ENCODE measurements at regions of chr11 and their contacts with region 1.

Region 1: DNA sequence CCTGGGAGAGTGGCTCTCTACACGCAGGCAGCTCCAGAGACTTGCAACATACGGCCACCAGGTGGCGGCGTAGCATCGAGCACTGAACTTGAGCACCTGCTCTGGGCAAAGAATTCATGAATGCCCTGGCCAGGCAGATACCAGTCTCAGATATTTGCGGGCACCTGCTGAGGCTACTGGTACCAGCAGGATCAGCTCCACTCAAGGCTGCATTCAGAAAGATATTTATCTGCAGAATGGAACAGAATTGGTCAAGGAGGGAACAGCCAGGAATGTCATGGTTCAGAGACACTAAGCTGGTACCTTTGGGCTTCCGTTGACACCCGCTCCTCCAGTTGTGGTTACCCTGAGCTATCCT is 10.8 kb upstream of the CCDC86 start:
- DNase-seq: peak; percentile 58 to 86 (median 71)
- H3K4me3 ChIP-seq: no peak overlapping the region
- H3K4me3 Mint-ChIP-seq: peak overlapping the region in 2 of 7 donors; percentile 54 to 83
- H3K27ac ChIP-seq: no peak overlapping the region
- H3K27ac Mint-ChIP-seq: peak overlapping the region in 3 of 8 donors; percentile 58 to 86 (median 60)
- H3K4me1 ChIP-seq: no peaks in the 10 kb centered on the region
- H3K4me1 Mint-ChIP-seq: peaks cover 0 to 3% (median 0%) of the 10 kb centered on the region in 3 donors
- H3K27me3 ChIP-seq: no peaks in the 10 kb centered on the region
- H3K27me3 Mint-ChIP-seq: peaks cover 12 to 29% of the 10 kb centered on the region in 2 donors

Region 2: DNA sequence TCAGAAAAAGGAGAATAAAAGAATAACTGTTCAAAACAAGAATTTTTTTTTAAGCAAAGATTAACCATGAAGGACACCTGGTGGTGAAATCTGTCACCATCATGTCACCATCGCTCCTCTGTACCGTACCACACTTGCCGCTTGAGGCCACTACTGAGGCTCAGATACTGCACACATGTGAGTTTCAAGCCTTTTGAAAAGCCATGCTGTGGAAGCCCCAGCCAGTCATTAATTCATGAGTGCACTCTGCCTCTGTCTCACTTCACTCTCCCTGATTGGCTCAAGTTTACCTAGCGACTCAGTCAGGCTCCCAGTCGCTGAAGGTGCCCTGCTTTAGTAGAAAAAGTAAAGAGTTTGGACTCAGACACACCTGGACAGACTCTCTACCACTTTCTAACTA is 345.1 kb before region 1 on chr11:
- CTCF ChIA-PET with region 1: no interaction called
- POLR2A ChIA-PET with region 1: no interaction called
- DNase-seq: no peak
- H3K4me3 ChIP-seq: no peak overlapping the region
- H3K4me3 Mint-ChIP-seq: no peak overlapping the region
- H3K27ac ChIP-seq: no peak overlapping the region
- H3K27ac Mint-ChIP-seq: peak overlapping the region in 1 of 8 donors; percentile 6
- H3K4me1 ChIP-seq: no peaks in the 10 kb centered on the region
- H3K4me1 Mint-ChIP-seq: peaks cover 8 to 13% (median 11%) of the 10 kb centered on the region in 3 donors
- H3K27me3 ChIP-seq: no peaks in the 10 kb centered on the region
- H3K27me3 Mint-ChIP-seq: peaks cover 7 to 12% of the 10 kb centered on the region in 2 donors

Region 3: DNA sequence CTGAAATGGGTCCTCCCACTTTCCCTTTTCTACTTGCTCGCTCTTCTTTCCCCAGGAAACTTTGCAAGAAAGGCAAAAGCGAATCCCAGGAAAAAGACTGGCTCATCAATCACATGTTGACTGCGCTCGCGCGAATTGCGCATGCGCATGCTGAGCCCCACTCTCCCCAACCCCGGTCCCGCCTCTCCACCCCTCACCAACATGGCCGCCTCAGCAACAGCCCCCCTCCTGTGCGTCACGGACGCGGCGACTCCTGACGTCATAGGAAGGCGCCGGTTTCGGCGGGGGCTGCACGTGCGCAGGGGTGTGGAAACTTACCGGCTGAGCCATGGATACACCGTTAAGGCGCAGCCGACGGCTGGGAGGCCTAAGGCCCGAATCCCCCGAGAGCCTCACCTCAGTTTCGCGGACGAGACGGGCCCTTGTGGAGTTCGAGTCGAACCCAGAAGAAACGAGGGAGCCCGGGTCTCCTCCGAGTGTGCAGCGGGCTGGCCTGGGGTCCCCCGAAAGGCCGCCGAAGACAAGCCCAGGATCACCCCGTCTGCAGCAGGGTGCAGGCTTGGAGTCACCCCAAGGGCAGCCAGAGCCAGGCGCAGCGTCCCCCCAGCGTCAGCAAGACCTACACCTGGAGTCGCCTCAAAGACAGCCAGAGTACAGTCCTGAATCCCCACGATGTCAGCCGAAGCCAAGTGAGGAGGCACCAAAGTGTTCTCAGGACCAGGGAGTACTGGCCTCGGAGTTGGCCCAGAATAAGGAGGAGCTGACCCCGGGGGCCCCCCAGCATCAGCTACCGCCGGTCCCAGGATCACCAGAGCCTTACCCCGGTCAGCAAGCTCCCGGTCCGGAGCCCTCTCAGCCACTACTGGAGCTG is 10.9 kb after region 1 on chr11 and contains the start of gene CCDC86:
- CTCF ChIA-PET with region 1: interaction called, 20 read pairs
- POLR2A ChIA-PET with region 1: no interaction called
- DNase-seq: peak; percentile 96 to 99 (median 98)
- H3K4me3 ChIP-seq: peak within 1 kb of the TSS; percentile 95
- H3K4me3 Mint-ChIP-seq: peak within 1 kb of the TSS; percentile 80 to 95 (median 89)
- H3K27ac ChIP-seq: peak within 1 kb of the TSS; percentile 83
- H3K27ac Mint-ChIP-seq: peak within 1 kb of the TSS; percentile 92 to 98 (median 96)
- H3K4me1 ChIP-seq: peaks cover 37% of the 10 kb centered on the region
- H3K4me1 Mint-ChIP-seq: peaks cover 45 to 55% (median 54%) of the 10 kb centered on the region in 3 donors
- H3K27me3 ChIP-seq: no peaks in the 10 kb centered on the region
- H3K27me3 Mint-ChIP-seq: peaks cover 0 to 3% of the 10 kb centered on the region in 2 donors
- total RNA-seq, gene CCDC86: 122 to 124 TPM

Region 4: GRCh38 chr11:60887556-60887955 is 56.4 kb after region 1 on chr11:
- CTCF ChIA-PET with region 1: interaction called, 64 read pairs
- POLR2A ChIA-PET with region 1: interaction called, 4 read pairs
- DNase-seq: peak in 1 of 5 donors; percentile 38
- H3K4me3 ChIP-seq: no peak overlapping the region
- H3K4me3 Mint-ChIP-seq: no peak overlapping the region
- H3K27ac ChIP-seq: no peak overlapping the region
- H3K27ac Mint-ChIP-seq: peak overlapping the region in 5 of 8 donors; percentile 7 to 74 (median 48)
- H3K4me1 ChIP-seq: no peaks in the 10 kb centered on the region
- H3K4me1 Mint-ChIP-seq: peaks cover 6 to 8% (median 8%) of the 10 kb centered on the region in 3 donors
- H3K27me3 ChIP-seq: no peaks in the 10 kb centered on the region
- H3K27me3 Mint-ChIP-seq: no peaks in the 10 kb centered on the region

Region 5: DNA sequence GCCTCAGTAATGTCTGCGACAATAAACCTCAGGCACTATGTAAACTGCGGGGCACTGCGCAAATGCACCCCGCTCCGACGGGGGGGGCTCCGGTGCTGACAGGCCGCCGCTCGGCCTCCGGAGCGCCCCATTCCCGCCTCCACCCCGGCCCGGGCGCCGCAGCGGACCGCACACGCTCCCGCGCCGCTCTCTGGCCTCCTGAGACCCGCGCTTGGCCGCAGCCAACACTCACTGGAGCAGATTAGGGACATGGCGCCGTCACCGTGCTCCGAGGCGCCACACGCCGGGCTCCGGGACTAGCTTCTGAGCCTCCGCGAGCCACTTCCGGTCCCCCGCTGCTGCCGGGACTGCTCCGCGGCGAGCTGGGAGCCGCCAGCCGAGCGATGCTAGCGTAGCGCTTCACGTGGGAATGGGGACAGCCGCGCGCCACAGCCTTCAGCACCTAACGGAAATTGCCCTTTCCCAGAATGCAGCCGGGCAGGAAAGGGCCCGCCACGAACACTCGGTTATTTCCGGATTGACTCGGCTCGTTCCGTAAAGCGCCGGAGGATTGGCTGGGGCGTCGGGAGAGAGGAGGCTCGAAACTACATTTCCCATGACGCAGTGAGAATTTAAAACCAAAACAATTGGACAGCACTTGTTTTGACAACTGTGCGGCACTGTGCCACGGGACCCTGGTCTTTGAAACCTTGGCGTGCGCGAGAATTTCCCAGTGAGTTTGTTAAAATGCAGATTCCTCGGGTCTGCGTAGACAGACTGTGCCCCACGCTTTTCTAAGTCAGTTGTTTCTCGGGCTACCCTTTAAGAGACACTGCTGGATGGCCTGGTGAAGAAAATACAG is 75.2 kb after region 1 on chr11 and contains the start of gene PRPF19:
- CTCF ChIA-PET with region 1: interaction called, 20 read pairs
- POLR2A ChIA-PET with region 1: interaction called, 4 read pairs
- DNase-seq: peak; percentile 99
- H3K4me3 ChIP-seq: peak within 1 kb of the TSS; percentile 80
- H3K4me3 Mint-ChIP-seq: peak within 1 kb of the TSS; percentile 89 to 95 (median 91)
- H3K27ac ChIP-seq: peak within 1 kb of the TSS; percentile 68
- H3K27ac Mint-ChIP-seq: peak within 1 kb of the TSS; percentile 94 to 99 (median 98)
- H3K4me1 ChIP-seq: peaks cover 36% of the 10 kb centered on the region
- H3K4me1 Mint-ChIP-seq: peaks cover 40 to 61% (median 49%) of the 10 kb centered on the region in 3 donors
- H3K27me3 ChIP-seq: no peaks in the 10 kb centered on the region
- H3K27me3 Mint-ChIP-seq: no peaks in the 10 kb centered on the region
- total RNA-seq, gene PRPF19: 201 to 204 TPM

Region 6: DNA sequence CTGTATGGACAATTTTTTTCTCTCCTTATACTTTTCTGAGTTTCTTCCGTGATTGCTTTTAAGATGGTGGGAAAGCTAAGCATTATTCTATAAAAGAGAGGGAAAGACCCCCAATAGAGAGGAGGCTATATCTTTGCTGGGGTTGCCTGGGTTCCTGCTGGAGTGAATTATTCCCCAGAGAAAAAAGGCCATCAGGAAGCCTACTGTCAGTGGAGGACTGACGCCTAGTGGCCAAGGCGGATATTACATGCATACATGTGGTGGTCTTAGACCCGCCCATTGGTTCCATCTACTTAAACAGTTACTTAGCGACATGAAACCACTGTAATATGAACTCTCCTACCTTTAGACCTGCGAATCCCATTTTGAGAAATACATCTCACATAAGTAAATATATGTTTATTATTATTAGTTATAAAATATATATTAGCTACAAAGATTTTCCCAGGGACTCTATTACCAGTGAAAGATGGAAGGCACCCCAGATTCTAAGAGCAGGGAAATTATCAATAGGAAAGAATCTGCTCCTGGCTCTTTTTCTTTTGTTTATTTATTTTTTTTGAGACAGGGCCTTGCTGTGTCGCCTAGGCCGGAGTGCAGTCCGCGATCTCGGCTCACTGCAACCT is 356.5 kb after region 1 on chr11:
- CTCF ChIA-PET with region 1: interaction called, 35 read pairs
- POLR2A ChIA-PET with region 1: no interaction called
- DNase-seq: peak; percentile 63 to 86 (median 71)
- H3K4me3 ChIP-seq: no peak overlapping the region
- H3K4me3 Mint-ChIP-seq: no peak overlapping the region
- H3K27ac ChIP-seq: no peak overlapping the region
- H3K27ac Mint-ChIP-seq: peak overlapping the region in 1 of 8 donors; percentile 73
- H3K4me1 ChIP-seq: no peaks in the 10 kb centered on the region
- H3K4me1 Mint-ChIP-seq: no peaks in the 10 kb centered on the region
- H3K27me3 ChIP-seq: no peaks in the 10 kb centered on the region
- H3K27me3 Mint-ChIP-seq: peaks cover 0 to 17% of the 10 kb centered on the region in 2 donors

Measured in CD8-positive, alpha-beta memory T cell (primary cell).